Transverse colon (tissue), 4 donors: ENCODE measurements at regions of chr2 and their contacts with region 1.

Region 1: DNA sequence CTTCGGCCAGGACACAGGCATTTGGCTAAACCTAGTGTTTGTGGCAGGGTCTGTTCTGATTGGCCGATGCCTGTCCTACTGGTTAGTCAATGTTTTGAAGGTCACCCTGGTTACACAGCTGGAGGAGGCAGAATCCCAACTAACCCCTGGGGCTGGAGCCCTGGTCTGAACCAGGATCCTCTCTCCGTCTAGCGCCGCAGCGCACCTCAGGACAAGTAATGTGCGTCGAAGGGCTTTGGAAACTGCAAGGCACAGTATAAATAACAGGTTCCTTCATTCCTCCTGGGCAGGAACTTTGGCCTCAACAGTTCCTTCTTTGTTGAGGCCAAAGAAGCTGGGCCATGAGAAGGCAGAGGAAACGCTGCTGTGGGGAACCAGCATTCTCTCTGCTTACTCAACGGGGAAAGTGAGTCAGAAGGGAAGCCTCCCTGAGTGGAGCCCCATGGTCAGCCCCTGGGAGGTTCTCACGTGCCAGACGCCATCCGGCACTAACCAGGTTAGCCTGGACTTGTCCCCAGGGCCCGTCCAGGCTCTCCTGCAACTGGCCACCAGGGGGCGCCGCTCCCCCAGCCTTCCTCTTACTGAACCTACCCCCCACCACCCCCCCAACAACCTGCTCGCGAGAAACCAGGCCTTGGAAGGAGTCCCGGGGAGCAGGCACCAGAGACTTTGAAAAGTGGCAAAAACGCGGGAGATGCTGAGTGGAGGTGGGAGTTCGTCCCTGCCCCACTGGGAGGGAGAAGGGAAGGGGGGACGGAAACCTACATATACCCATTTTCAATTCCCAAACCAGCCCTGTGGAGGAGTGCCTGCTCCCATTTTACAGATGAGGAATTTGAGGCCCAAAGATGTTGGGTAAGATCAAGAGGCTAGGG is 19.8 kb downstream of the TEX44 start:
- DNase-seq: peak; percentile 96
- H3K4me3 ChIP-seq: no peak overlapping the region
- H3K27ac ChIP-seq: peak overlapping the region; percentile 93 to 98 (median 94)
- H3K4me1 ChIP-seq: peaks cover 29 to 57% (median 52%) of the 10 kb centered on the region in 4 donors
- H3K27me3 ChIP-seq: no peaks in the 10 kb centered on the region
- CTCF ChIP-seq: peak; percentile 97 to 99 (median 99)
- EP300 ChIP-seq: no peak
- POLR2A ChIP-seq: peak; percentile 32

Region 2: DNA sequence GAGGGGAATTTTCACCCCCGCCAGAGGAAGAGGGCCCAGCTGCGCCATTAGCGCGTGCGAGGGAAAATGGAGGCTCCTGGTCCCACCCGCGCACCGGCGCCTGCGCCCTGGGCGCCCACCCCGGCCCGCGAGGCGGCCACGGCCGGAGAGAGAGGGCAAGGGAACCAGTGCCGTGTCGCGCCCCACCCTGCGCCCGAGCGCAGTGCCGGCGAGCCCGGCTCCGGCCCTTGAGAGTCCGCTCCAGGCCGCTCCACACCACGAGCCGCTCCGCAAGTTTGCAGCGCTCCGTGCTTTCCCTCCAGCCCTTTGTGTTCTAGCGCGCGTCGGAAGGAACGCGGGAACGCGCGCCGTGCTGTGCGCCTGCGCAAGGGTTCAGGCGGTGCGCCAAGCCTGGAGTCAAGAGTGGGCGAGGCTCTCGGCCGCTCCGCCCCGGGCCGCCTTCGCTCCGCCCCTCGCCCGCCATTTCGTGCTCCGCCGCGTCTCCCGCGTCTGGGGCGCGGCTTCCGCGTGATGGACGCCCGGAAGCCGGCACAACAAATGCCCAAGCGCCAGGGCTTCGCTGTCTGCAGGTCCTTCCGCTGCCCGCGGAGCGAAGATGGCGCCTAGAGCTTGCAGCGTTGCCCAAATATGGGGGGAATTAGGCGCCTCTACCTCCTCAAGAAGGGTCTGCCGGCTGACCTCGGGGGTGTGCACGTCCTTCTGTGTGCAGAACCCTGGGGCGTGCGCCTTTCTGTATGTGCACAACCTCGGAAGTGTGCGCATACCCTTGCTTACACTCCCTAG is 49.8 kb after region 1 on chr2:
- in situ Hi-C with region 1: loop called in 1 of 4 experiments (anchors 10 kb)
- intact Hi-C with region 1: no loop called
- DNase-seq: peak; percentile 98
- H3K4me3 ChIP-seq: peak overlapping the region; percentile 24 to 53 (median 30)
- H3K27ac ChIP-seq: peak overlapping the region; percentile 96 to 100 (median 98)
- H3K4me1 ChIP-seq: peaks cover 8 to 55% (median 28%) of the 10 kb centered on the region in 4 donors
- H3K27me3 ChIP-seq: no peaks in the 10 kb centered on the region
- CTCF ChIP-seq: peak in 2 of 5 experiments; percentile 38 to 48
- EP300 ChIP-seq: no peak
- POLR2A ChIP-seq: peak; percentile 72

Region 3: GRCh38 chr2:231674587-231675338 is 62.3 kb after region 1 on chr2:
- in situ Hi-C with region 1: loop called (anchors 5 to 10 kb)
- intact Hi-C with region 1: loop called (anchors 2 kb)
- DNase-seq: peak; percentile 83
- H3K4me3 ChIP-seq: no peak overlapping the region
- H3K27ac ChIP-seq: peak overlapping the region; percentile 96 to 100 (median 98)
- H3K4me1 ChIP-seq: peaks cover 49 to 63% (median 56%) of the 10 kb centered on the region in 4 donors
- H3K27me3 ChIP-seq: no peaks in the 10 kb centered on the region
- CTCF ChIP-seq: peak; percentile 76 to 94 (median 88)
- EP300 ChIP-seq: no peak
- POLR2A ChIP-seq: no peak